Activated CD4-positive, alpha-beta T cell treated with anti-CD3 and anti-CD28 coated beads, Interleukin-2, amount 10 ng/mL, durations not matched to agents 24 days and 14 days (primary cell): ENCODE measurements at regions of chr9 and their contacts with region 1.

Region 1: DNA sequence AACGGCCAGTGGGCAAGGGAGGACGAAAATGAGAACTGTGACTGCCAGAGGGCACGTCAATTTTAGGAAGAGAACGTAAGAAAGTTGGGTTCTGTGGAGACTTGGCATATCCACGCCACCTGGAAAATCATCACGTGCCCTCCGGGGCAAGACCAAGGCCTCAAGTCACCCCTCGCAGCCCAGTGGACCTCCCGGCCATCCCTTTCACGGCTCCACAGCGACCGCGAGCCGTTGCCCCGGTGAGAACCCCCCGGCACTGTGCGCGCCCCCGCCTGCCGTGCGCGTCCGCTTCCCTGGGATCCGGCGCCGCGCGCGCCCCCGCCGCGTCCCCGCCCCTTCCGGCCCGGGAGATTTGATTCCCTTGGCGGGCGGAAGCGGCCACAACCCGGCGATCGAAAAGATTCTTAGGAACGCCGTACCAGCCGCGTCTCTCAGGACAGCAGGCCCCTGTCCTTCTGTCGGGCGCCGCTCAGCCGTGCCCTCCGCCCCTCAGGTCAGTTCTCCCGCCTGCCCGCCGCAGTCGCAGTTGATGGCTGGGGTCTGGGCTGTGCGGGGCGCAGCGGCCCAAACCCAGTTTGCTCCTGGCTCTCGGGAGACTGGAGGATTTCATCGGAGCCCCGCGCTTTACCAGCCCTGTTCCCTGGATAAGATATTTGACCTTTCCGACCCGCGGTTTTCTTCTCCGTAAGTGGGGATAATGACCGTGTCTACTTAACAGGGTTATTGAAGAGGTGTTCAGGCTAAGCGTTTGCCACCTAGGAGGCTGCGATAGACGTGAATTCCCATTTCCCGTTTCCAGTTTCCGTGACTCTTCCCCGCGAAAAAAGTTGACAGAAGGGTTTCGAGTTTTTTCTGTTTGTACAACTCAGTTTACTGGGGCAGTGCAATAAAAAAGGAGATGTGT is at the start of gene MELK:
- DNase-seq: peak; percentile 97
- H3K4me3 Mint-ChIP-seq: peak within 1 kb of the TSS; percentile 97
- H3K27ac Mint-ChIP-seq: peak within 1 kb of the TSS; percentile 89
- H3K4me1 Mint-ChIP-seq: peaks cover 31% of the 10 kb centered on the region
- H3K27me3 Mint-ChIP-seq: peaks cover 7% of the 10 kb centered on the region
- total RNA-seq, gene MELK: 54.2 and 57.0 TPM in 2 replicates

Region 2: DNA sequence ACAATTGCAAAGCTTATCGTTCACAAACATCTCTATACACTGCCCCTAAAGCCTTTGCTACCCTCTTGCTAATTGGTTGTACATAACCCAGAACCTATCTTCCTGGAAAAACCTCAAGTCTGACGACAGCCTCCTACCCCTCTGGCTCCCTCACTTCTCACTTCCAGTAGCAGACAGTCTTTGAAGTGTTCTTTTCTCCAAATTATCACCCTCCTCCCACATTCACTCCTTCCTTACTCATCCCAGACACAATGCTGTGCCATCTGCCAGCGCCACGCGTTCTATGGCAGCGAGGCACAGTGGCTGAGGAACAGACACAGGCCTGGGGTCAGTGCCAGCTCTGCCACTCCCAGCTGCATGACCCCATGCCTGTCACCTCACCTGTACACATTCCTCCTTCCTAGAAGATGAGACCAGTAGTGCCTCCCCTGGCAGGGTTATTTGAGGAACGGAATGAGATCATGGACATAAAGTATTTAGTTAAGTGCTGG is 354.3 kb before region 1 on chr9:
- intact Hi-C with region 1: loop called (anchors 10 kb)
- DNase-seq: peak; percentile 82
- H3K4me3 Mint-ChIP-seq: peak overlapping the region; percentile 64
- H3K27ac Mint-ChIP-seq: peak overlapping the region; percentile 84
- H3K4me1 Mint-ChIP-seq: peaks cover 44% of the 10 kb centered on the region
- H3K27me3 Mint-ChIP-seq: no peaks in the 10 kb centered on the region

Region 3: GRCh38 chr9:36258208-36258988 is 314.4 kb before region 1 on chr9 and contains the start of gene GNE:
- intact Hi-C with region 1: loop called (anchors 1 kb)
- DNase-seq: peak; percentile 100
- H3K4me3 Mint-ChIP-seq: peak within 1 kb of the TSS; percentile 93
- H3K27ac Mint-ChIP-seq: peak within 1 kb of the TSS; percentile 94
- H3K4me1 Mint-ChIP-seq: peaks cover 10% of the 10 kb centered on the region
- H3K27me3 Mint-ChIP-seq: peaks cover 2% of the 10 kb centered on the region
- total RNA-seq, gene GNE: 22.2 and 23.3 TPM in 2 replicates

Region 4: GRCh38 chr9:36530224-36530623 is 42.5 kb before region 1 on chr9:
- intact Hi-C with region 1: no loop called
- DNase-seq: no peak
- H3K4me3 Mint-ChIP-seq: no peak overlapping the region
- H3K27ac Mint-ChIP-seq: no peak overlapping the region
- H3K4me1 Mint-ChIP-seq: peaks cover 2% of the 10 kb centered on the region
- H3K27me3 Mint-ChIP-seq: peaks cover 11% of the 10 kb centered on the region